ENCODE measurements at regions of chr19 and their contacts with region 1.

Region 1: GRCh38 chr19:14059093-14059480 is 2.8 kb downstream of the PALM3 start:
- DNase-seq: peak; percentile 44 to 66 (median 63)
- H3K4me3 ChIP-seq: peak overlapping the region in 1 of 7 experiments; percentile 30
- H3K27ac ChIP-seq: no peak overlapping the region
- H3K4me1 ChIP-seq: peaks cover 0 to 18% (median 17%) of the 10 kb centered on the region in 4 experiments
- H3K27me3 ChIP-seq: peaks cover 0 to 49% (median 11%) of the 10 kb centered on the region in 5 experiments

Region 2: GRCh38 chr19:14048443-14049153 is 10.5 kb before region 1 on chr19:
- CTCF ChIA-PET with region 1: interaction called, 46 read pairs
- POLR2A ChIA-PET with region 1: no interaction called
- DNase-seq: peak; percentile 64 to 79 (median 70)
- H3K4me3 ChIP-seq: no peak overlapping the region
- H3K27ac ChIP-seq: no peak overlapping the region
- H3K4me1 ChIP-seq: peaks cover 0 to 3% (median 1%) of the 10 kb centered on the region in 4 experiments
- H3K27me3 ChIP-seq: no peaks in the 10 kb centered on the region

Region 3: GRCh38 chr19:14073261-14073924 is 14.3 kb after region 1 on chr19:
- CTCF ChIA-PET with region 1: interaction called, 102 read pairs
- POLR2A ChIA-PET with region 1: interaction called, 4 read pairs
- DNase-seq: peak; percentile 76 to 86 (median 86)
- H3K4me3 ChIP-seq: peak overlapping the region; percentile 58 to 83 (median 75)
- H3K27ac ChIP-seq: peak overlapping the region in 1 of 2 experiments; percentile 54
- H3K4me1 ChIP-seq: peaks cover 5 to 44% (median 38%) of the 10 kb centered on the region in 4 experiments
- H3K27me3 ChIP-seq: no peaks in the 10 kb centered on the region

Region 4: GRCh38 chr19:14337510-14337909 is 278.4 kb after region 1 on chr19:
- CTCF ChIA-PET with region 1: no interaction called
- POLR2A ChIA-PET with region 1: no interaction called
- DNase-seq: peak; percentile 57 to 81 (median 79)
- H3K4me3 ChIP-seq: no peak overlapping the region
- H3K27ac ChIP-seq: no peak overlapping the region
- H3K4me1 ChIP-seq: peaks cover 0 to 8% (median 7%) of the 10 kb centered on the region in 4 experiments
- H3K27me3 ChIP-seq: no peaks in the 10 kb centered on the region